ENCODE measurements at regions of chr13 and their contacts with region 1.

Region 1: DNA sequence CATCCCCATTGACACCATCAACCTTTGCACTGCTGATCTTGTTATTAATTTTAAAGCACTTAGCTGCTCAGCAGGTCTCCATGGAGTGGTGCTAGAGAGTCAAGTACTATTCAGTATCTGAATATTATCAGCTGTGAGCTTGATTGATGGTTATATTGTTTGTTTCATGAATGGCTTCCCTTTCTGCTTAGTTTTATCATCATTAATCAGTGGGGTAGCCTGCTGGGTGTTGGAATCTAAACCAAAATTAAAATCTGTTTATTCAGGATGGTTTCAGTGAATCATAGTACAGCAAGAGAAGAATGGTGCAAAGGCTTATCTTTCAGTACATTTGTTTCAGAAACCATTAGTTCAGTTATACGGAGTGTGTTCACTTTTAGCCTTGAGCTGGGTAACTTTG is 42.5 kb upstream of the SCEL start:
- DNase-seq: no peak
- ATAC-seq: peak; percentile 95
- H3K4me3 ChIP-seq: no peak overlapping the region
- H3K27ac ChIP-seq: no peak overlapping the region
- H3K4me1 ChIP-seq: peaks cover 8% of the 10 kb centered on the region; the same call in 1 of the 2 replicates
- H3K27me3 ChIP-seq: no peaks in the 10 kb centered on the region
- CTCF ChIP-seq: peak; percentile 68 to 81 (median 75); a peak in 5 of 6 replicates
- EP300 ChIP-seq: no peak
- POLR2A ChIP-seq: no peak
- RAD21 ChIP-seq: peak; percentile 88

Region 2: DNA sequence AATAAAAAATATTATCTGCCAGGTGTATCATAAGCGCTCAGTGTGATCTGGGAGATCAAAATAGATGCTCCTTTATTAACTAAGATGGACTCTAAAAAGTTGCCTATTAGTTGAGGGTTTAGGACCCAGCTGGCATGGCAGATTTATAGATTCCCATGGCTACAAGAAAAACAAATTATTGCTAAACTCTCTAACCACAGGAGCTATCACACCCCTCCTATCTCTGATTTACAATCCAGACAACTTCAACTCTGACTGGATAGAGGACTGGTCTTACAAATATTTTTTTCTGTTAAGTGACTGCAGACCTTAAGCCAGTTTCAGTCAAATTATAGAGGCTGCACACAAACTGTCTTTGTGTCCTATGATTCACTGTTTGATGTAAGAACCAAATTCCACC is 120.7 kb before region 1 on chr13:
- CTCF ChIA-PET with region 1: no interaction called
- POLR2A ChIA-PET with region 1: no interaction called
- RAD21 ChIA-PET with region 1: no interaction called
- SMC1A ChIA-PET with region 1: no interaction called
- in situ Hi-C with region 1: no loop called
- intact Hi-C with region 1: no loop called
- DNase-seq: no peak
- ATAC-seq: peak; percentile 22; the same call in 1 of the 3 replicates
- H3K4me3 ChIP-seq: no peak overlapping the region
- H3K27ac ChIP-seq: no peak overlapping the region
- H3K4me1 ChIP-seq: no peaks in the 10 kb centered on the region
- H3K27me3 ChIP-seq: no peaks in the 10 kb centered on the region
- CTCF ChIP-seq: no peak
- EP300 ChIP-seq: no peak
- POLR2A ChIP-seq: no peak
- RAD21 ChIP-seq: no peak

Region 3: GRCh38 chr13:77415253-77416071 is 77.5 kb before region 1 on chr13:
- CTCF ChIA-PET with region 1: no interaction called
- POLR2A ChIA-PET with region 1: no interaction called
- RAD21 ChIA-PET with region 1: no interaction called
- SMC1A ChIA-PET with region 1: no interaction called
- in situ Hi-C with region 1: no loop called
- intact Hi-C with region 1: no loop called
- DNase-seq: peak; percentile 45
- ATAC-seq: peak; percentile 93
- H3K4me3 ChIP-seq: no peak overlapping the region
- H3K27ac ChIP-seq: peak overlapping the region; percentile 26; the same call in 1 of the 2 replicates
- H3K4me1 ChIP-seq: peaks cover 10% of the 10 kb centered on the region
- H3K27me3 ChIP-seq: no peaks in the 10 kb centered on the region
- CTCF ChIP-seq: no peak
- EP300 ChIP-seq: no peak
- POLR2A ChIP-seq: 0 out of 2 replicates have a peak, but pooled peaks have one; percentile 32
- RAD21 ChIP-seq: 0 out of 2 replicates have a peak, but pooled peaks have one; percentile 17

Region 4: GRCh38 chr13:77460195-77460594 is 32.8 kb before region 1 on chr13:
- CTCF ChIA-PET with region 1: no interaction called
- POLR2A ChIA-PET with region 1: no interaction called
- RAD21 ChIA-PET with region 1: no interaction called
- SMC1A ChIA-PET with region 1: no interaction called
- in situ Hi-C with region 1: no loop called
- intact Hi-C with region 1: no loop called
- DNase-seq: peak; percentile 26
- ATAC-seq: peak; percentile 99
- H3K4me3 ChIP-seq: no peak overlapping the region
- H3K27ac ChIP-seq: no peak overlapping the region
- H3K4me1 ChIP-seq: peaks cover 3% of the 10 kb centered on the region; the same call in 1 of the 2 replicates
- H3K27me3 ChIP-seq: no peaks in the 10 kb centered on the region
- CTCF ChIP-seq: no peak
- EP300 ChIP-seq: no peak
- POLR2A ChIP-seq: no peak
- RAD21 ChIP-seq: no peak

Region 5: DNA sequence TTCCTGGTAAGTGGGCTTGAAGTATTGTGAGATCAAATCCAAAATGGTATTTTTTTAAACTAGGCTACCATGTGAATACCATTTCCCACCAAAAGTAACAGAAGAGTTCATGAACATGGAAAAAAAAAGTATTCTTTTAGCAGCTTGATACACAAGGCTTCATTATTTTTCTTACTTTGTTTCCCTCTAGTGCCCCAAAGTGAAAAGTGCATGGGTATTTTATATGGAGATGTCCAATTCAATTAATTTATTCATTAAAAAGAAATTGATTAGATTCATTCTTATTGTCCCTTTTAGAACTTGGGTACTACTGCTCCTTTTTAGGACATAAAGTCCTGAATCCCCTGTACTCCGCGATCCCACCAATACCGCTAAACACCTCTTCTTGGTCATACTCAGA is 13.9 kb after region 1 on chr13:
- CTCF ChIA-PET with region 1: interaction called, 41 read pairs
- POLR2A ChIA-PET with region 1: no interaction called
- RAD21 ChIA-PET with region 1: interaction called, 23 read pairs
- SMC1A ChIA-PET with region 1: interaction called, 24 read pairs
- in situ Hi-C with region 1: no loop called
- intact Hi-C with region 1: no loop called
- DNase-seq: no peak
- ATAC-seq: no peak
- H3K4me3 ChIP-seq: no peak overlapping the region
- H3K27ac ChIP-seq: no peak overlapping the region
- H3K4me1 ChIP-seq: peaks cover 17% of the 10 kb centered on the region
- H3K27me3 ChIP-seq: no peaks in the 10 kb centered on the region
- CTCF ChIP-seq: peak; percentile 16 to 32 (median 22); a peak in 3 of 6 replicates
- EP300 ChIP-seq: no peak
- POLR2A ChIP-seq: no peak
- RAD21 ChIP-seq: peak; percentile 18; the same call in 1 of the 2 replicates

Region 6: DNA sequence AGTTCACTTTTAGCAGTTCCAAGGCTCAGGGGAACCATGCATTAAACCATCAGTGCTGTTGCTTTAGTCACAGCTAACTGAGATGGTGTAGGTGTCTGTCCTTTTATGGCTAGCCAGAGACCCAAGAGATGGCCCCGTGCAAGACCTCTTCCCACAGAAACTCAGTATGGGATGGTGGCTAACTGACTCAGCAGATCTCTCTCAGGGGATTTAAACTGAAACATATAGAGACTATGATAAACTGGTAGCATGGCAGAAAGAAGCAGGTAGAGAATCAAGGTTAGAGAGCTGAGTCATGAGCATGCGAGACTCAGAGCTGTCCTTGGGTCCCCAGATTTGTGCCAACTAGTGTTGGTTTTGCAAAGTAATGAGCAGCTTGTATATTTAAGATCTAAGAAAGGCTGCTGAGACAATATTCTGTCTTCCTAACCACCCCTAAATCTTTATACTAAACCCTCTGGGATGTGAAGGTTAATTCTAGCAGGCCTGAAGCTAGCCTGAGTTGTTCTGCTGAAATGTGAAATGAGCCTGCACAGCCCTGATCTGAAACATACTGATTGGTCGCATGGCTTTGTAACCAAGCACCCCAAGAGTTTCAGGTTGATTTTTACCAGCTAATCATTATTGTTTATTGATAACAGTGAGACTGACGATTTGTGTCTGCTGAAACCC is 36.0 kb after region 1 on chr13:
- CTCF ChIA-PET with region 1: interaction called, 13 read pairs
- POLR2A ChIA-PET with region 1: no interaction called
- RAD21 ChIA-PET with region 1: interaction called, 9 read pairs
- SMC1A ChIA-PET with region 1: interaction called, 6 read pairs
- in situ Hi-C with region 1: no loop called
- intact Hi-C with region 1: no loop called
- DNase-seq: no peak
- ATAC-seq: peak; percentile 93
- H3K4me3 ChIP-seq: no peak overlapping the region
- H3K27ac ChIP-seq: no peak overlapping the region
- H3K4me1 ChIP-seq: 0 out of 2 replicates have a peak, but pooled peaks cover 10% of the 10 kb centered on the region
- H3K27me3 ChIP-seq: peaks cover 0 to 3% of the 10 kb centered on the region in 2 experiments; a peak in 1 of 4 replicates
- CTCF ChIP-seq: no peak
- EP300 ChIP-seq: peak; percentile 26 to 64; a peak in 2 of 4 replicates
- POLR2A ChIP-seq: no peak
- RAD21 ChIP-seq: no peak

Region 7: GRCh38 chr13:77544355-77544754 is 51.4 kb after region 1 on chr13:
- CTCF ChIA-PET with region 1: interaction called, 16 read pairs
- POLR2A ChIA-PET with region 1: no interaction called
- RAD21 ChIA-PET with region 1: interaction called, 11 read pairs
- SMC1A ChIA-PET with region 1: interaction called, 16 read pairs
- in situ Hi-C with region 1: no loop called
- intact Hi-C with region 1: no loop called
- DNase-seq: no peak
- ATAC-seq: no peak
- H3K4me3 ChIP-seq: no peak overlapping the region
- H3K27ac ChIP-seq: no peak overlapping the region
- H3K4me1 ChIP-seq: peaks cover 4% of the 10 kb centered on the region
- H3K27me3 ChIP-seq: no peaks in the 10 kb centered on the region
- CTCF ChIP-seq: no peak
- EP300 ChIP-seq: no peak
- POLR2A ChIP-seq: no peak
- RAD21 ChIP-seq: no peak

Region 8: DNA sequence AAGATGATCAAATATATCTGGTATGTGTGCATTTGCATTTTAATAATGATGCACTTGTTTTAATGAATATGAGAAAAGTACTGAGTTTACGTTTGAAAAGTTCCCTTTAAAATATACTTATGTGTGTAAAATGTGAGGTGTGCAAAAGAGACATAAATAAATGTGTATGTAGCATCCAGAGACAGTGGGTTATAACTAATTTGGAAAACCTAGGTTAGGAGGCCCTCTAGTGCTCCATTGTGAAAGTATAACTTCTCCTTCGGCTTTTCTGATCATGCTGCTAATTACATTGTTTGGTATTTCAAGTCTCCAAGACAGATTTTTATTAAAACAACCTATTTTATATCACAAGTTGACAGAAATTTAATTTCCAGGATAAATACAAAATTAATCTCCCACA is 72.7 kb after region 1 on chr13:
- CTCF ChIA-PET with region 1: interaction called, 174 read pairs
- POLR2A ChIA-PET with region 1: interaction called, 5 read pairs
- RAD21 ChIA-PET with region 1: interaction called, 75 read pairs
- SMC1A ChIA-PET with region 1: interaction called, 98 read pairs
- in situ Hi-C with region 1: loop called (anchors 5 kb)
- intact Hi-C with region 1: loop called (anchors 1 kb)
- DNase-seq: no peak
- ATAC-seq: peak; percentile 95
- H3K4me3 ChIP-seq: no peak overlapping the region
- H3K27ac ChIP-seq: no peak overlapping the region
- H3K4me1 ChIP-seq: no peaks in the 10 kb centered on the region
- H3K27me3 ChIP-seq: no peaks in the 10 kb centered on the region
- CTCF ChIP-seq: peak; percentile 44 to 76 (median 52); a peak in 5 of 6 replicates
- EP300 ChIP-seq: no peak
- POLR2A ChIP-seq: no peak
- RAD21 ChIP-seq: peak; percentile 95

Region 9: GRCh38 chr13:77751513-77752456 is 258.8 kb after region 1 on chr13:
- CTCF ChIA-PET with region 1: interaction called, 8 read pairs
- POLR2A ChIA-PET with region 1: no interaction called
- RAD21 ChIA-PET with region 1: interaction called, 19 read pairs
- SMC1A ChIA-PET with region 1: interaction called, 11 read pairs
- in situ Hi-C with region 1: no loop called
- intact Hi-C with region 1: loop called (anchors 2 kb)
- DNase-seq: peak; percentile 34
- ATAC-seq: peak; percentile 91
- H3K4me3 ChIP-seq: no peak overlapping the region
- H3K27ac ChIP-seq: no peak overlapping the region
- H3K4me1 ChIP-seq: no peaks in the 10 kb centered on the region
- H3K27me3 ChIP-seq: no peaks in the 10 kb centered on the region
- CTCF ChIP-seq: peak; percentile 77 to 90 (median 81)
- EP300 ChIP-seq: no peak
- POLR2A ChIP-seq: no peak
- RAD21 ChIP-seq: peak; percentile 94

Measured in GM12878 (cell line).